ENCODE measurements at regions of chr2 and their contacts with region 1.

Region 1: GRCh38 chr2:191222507-191222906 is 22.7 kb upstream of the MYO1B start:
- DNase-seq: no peak
- H3K4me3 ChIP-seq: no peak overlapping the region
- H3K27ac ChIP-seq: no peak overlapping the region
- H3K4me1 ChIP-seq: peaks cover 0 to 24% (median 7%) of the 10 kb centered on the region in 4 donors
- H3K27me3 ChIP-seq: no peaks in the 10 kb centered on the region
- CTCF ChIP-seq: no peak
- EP300 ChIP-seq: no peak
- POLR2A ChIP-seq: no peak

Region 2: GRCh38 chr2:191369036-191369435 is 146.5 kb after region 1 on chr2:
- intact Hi-C with region 1: no loop called
- DNase-seq: no peak
- H3K4me3 ChIP-seq: no peak overlapping the region
- H3K27ac ChIP-seq: no peak overlapping the region
- H3K4me1 ChIP-seq: no peaks in the 10 kb centered on the region
- H3K27me3 ChIP-seq: no peaks in the 10 kb centered on the region
- CTCF ChIP-seq: no peak
- EP300 ChIP-seq: no peak
- POLR2A ChIP-seq: no peak

Region 3: DNA sequence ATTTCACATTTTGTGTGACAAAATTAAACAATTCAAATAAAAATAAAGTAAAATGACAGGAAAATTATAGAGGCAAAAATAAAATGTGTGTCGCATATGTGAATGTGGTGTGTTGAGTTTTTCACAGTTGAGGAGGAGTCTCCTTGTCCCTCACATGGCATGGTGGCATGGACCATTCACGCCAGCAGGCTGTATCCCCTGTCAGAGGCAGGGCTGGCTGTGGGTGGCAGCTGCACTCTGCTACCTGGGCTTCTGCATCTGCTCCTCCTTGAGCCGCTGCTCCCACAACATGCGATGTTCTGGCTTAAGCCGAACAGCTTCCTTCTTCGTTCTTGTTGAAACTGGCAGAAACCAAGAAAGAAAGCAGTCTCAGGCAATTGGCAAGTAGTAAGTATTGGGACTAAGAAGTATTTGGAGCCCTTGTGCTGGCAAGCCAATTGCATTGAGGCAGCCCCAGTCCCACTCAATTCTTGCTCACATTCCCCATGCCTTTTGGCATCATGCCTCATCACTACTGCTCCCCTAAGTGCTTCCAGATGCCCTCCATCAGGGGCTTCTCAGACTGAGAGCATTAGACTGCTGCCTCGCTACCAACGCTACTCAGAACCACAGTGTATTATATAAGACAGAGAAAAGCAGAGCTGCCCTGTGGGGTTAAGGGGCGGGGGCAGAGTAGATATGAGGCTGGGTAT is 277.5 kb after region 1 on chr2:
- intact Hi-C with region 1: loop called (anchors 5 kb)
- DNase-seq: peak in 1 of 2 donors; percentile 72
- H3K4me3 ChIP-seq: no peak overlapping the region
- H3K27ac ChIP-seq: peak overlapping the region in 1 of 5 donors; percentile 20
- H3K4me1 ChIP-seq: peaks cover 0 to 9% (median 6%) of the 10 kb centered on the region in 4 donors
- H3K27me3 ChIP-seq: no peaks in the 10 kb centered on the region
- CTCF ChIP-seq: no peak
- EP300 ChIP-seq: no peak
- POLR2A ChIP-seq: no peak

Measured in stomach (tissue), 19 donors.